Mucosa of descending colon (tissue), 3 donors: ENCODE measurements at regions of chr6 and their contacts with region 1.

Region 1: GRCh38 chr6:111605100-111605751 is 452 bp downstream of the TRAF3IP2 start:
- DNase-seq: peak; percentile 64 to 71 (median 69)
- ATAC-seq: peak; percentile 38
- H3K4me3 ChIP-seq: peak overlapping the region; percentile 29
- H3K4me1 ChIP-seq: peaks cover 36% of the 10 kb centered on the region
- CTCF ChIP-seq: no peak

Region 2: DNA sequence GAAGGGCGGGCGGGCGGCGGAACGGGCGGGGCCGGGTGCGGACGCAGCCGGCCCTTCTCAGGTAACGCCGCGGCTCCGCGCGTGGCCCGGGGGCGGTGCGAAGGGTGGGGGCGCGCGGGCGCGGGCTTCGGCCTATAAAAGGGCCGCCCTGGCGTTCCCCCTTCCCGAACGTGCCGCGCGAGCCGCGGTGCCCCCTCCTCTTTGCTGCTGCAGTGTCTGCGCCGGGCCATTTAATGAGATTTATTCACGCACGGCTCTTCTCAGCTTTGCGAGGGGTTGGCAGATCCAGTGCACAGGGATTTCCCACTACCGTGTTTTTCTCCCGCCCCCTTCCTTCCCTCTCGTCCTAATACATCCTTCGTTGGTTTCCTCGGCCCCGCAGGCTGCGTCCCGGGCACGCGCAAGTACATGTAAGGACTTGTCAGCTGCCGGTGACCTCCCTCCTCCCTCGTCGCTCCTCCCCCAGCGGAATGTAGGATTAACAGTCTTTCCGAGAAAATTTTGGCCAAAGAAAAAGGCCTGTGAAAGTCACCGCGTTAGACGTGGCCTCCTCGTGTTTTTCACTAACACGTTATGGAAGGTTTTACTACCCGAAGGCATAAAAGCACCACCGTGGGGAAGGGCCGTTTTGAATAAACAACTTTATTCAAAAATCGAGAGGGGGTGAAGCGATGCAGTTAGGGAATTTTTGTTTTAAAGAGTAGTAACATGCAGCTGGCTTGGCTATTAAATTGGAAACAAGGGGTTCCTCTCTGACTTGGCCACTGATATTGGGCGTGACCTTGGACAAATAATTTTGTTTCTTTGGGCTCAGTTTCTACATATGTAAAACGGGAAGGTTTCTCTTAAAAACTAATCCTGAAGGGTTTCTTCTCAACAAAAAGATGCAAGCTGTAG is 121.2 kb before region 1 on chr6:
- intact Hi-C with region 1: loop called in 1 of 2 experiments (anchors 5 kb)
- DNase-seq: peak; percentile 89 to 96 (median 92)
- ATAC-seq: peak; percentile 89
- H3K4me3 ChIP-seq: peak overlapping the region; percentile 87
- H3K4me1 ChIP-seq: peaks cover 11% of the 10 kb centered on the region
- CTCF ChIP-seq: no peak

Region 3: DNA sequence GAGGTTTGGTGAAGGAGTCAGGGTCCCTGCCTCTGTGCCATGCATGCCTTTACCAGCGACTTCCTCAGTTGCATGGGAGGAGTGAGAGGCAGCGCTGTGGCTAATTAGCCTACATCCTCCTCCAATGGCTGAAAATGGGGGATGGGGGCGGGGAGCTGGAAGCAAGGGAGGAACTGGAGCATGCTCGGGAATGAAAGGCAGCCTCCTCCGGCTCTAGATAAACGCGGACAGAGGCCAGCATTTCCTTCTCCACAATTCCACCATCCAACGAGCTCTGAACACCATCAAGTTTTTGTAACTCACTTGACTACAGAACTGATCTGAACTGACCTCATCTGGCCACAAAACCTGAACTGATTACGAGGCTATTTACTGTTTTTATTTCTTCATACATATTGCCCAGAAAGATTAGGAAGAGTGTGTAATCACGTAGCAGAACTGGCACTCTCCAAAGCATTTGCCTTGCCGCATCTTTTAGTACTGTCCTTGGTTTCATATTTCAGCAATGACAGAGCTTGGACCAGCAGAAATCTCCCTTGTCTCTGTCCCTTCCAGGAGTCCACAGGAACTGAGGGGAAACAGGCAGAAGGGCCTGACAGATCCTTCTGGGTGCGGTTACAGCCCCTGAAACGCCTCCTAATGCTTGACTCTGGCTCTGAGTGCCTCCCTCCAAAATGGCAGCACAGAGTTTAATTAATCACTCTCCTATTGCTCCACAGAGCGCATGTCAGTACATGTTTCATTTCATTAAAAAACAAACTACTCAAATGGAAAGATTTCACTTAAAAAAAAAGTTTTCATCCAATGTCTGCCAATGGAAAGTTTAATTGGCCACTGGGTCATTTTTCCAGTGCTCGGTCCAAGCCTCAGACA is 58.7 kb after region 1 on chr6:
- intact Hi-C with region 1: loop called in 1 of 2 experiments (anchors 10 kb)
- DNase-seq: no peak
- ATAC-seq: peak; percentile 15
- H3K4me3 ChIP-seq: no peak overlapping the region
- H3K4me1 ChIP-seq: no peaks in the 10 kb centered on the region
- CTCF ChIP-seq: no peak